ENCODE measurements at regions of chr5 and their contacts with region 1.

Region 1: DNA sequence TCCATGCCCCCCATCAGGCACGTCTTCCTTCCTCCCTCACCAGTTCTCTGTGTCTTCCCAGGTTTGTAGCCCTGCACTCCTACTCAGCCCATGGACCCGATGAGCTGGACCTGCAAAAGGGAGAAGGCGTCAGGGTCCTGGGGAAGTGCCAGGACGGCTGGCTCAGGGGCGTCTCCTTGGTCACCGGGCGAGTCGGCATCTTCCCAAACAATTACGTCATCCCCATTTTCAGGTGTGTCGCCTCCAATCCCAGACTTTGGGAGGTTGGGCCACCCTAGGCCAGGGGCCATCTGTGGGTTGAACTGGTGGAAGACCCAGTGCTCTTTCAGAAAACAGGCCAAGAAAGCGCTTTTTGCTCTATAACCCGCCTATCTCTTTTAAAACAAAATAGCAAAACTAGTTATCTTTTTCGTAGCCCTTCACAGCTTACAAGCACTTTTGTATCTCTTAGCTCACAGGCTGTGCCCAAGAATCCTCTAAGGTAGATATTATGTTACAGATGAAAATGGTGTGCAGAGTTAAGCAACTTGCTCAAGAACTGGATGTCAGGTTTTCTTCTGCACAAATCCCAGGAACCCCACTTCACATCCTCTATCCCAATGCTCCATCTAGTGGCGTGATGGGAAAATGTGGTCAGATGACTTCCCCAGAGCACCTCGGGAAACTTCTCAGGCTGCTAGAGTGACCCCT is 56.2 kb downstream of the PLAC8L1 start:
- DNase-seq: no peak
- H3K4me3 Mint-ChIP-seq: no peak overlapping the region
- H3K27ac Mint-ChIP-seq: no peak overlapping the region
- H3K4me1 Mint-ChIP-seq: no peaks in the 10 kb centered on the region
- H3K27me3 Mint-ChIP-seq: peaks cover 16% of the 10 kb centered on the region

Region 2: DNA sequence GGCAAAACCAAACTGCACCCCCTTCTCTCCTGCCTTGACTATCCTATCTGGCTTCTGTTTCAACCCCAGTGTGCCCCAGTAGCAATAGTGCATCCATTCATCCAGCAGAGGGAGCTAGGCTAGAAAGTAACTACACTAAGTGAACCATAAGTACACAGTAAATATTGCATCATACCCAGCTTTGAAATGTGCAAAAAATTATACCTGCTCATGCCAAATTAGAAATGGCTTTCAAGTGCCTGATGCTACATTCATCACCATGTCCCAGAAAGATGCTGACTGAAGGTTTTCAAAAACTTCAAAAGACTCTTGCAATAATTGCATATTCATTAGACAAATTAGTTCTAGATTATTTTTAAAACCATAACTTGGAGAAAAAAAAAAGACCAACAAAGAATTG is 367.5 kb before region 1 on chr5:
- intact Hi-C with region 1: loop called (anchors 2 kb)
- DNase-seq: peak; percentile 77
- H3K4me3 Mint-ChIP-seq: no peak overlapping the region
- H3K27ac Mint-ChIP-seq: no peak overlapping the region
- H3K4me1 Mint-ChIP-seq: no peaks in the 10 kb centered on the region
- H3K27me3 Mint-ChIP-seq: no peaks in the 10 kb centered on the region

Region 3: GRCh38 chr5:145697251-145697990 is 351.7 kb before region 1 on chr5:
- intact Hi-C with region 1: loop called (anchors 5 kb)
- DNase-seq: peak; percentile 68
- H3K4me3 Mint-ChIP-seq: no peak overlapping the region
- H3K27ac Mint-ChIP-seq: no peak overlapping the region
- H3K4me1 Mint-ChIP-seq: no peaks in the 10 kb centered on the region
- H3K27me3 Mint-ChIP-seq: no peaks in the 10 kb centered on the region

Region 4: DNA sequence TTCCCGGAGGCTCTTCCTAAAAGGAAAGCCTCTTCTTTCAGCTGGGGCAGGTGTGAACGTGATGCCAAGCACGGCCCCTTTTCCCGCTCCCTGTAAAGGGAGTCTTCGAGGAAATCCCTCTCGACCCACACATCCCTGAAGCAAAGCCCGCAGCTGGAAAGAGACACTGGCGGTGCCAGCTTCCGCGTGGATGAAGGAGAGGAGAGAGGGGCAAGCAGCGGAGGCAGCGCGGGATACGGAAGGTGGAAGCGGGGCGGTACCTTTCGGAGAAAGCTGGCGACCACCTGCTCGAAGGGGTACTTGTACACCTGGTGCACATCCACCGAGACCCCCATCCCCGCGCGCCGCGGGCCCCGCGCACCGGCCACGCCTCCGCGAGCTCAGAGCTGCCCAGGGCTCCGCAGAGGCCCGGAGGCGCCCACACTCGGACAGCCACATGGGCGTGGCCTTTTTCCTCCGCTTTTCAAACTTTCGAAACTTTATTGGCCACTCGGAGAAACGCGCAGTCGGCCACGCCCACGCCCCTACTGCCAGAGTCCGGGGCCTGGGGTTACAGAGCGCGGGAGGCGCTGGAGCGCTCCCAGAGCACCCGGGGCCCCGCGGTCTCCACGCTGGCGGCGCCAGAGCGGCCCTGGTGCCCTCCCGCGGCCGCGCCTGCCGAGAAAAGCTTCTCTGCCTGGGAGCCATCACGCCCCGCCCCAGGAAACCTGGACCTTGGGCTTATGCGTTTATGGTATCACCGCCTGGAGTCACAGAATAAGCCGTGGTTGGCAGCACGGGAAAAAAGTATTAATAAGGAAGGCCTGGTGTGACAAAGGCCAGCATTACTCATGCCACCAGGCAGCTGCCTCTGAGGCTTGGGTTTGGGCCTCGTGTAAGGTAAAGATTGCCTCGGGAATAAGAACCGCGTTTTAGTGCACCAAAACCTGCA is 214.0 kb before region 1 on chr5 and contains the start of gene PRELID2:
- intact Hi-C with region 1: loop called (anchors 5 kb)
- DNase-seq: peak; percentile 88
- H3K4me3 Mint-ChIP-seq: peak within 1 kb of the TSS; percentile 77
- H3K27ac Mint-ChIP-seq: no peak within 1 kb of the TSS
- H3K4me1 Mint-ChIP-seq: peaks cover 15% of the 10 kb centered on the region
- H3K27me3 Mint-ChIP-seq: peaks cover 18% of the 10 kb centered on the region
- total RNA-seq, gene PRELID2: 3.1 and 3.6 TPM in 2 replicates

Region 5: GRCh38 chr5:146218168-146218567 is 169.0 kb after region 1 on chr5:
- intact Hi-C with region 1: no loop called
- DNase-seq: no peak
- H3K4me3 Mint-ChIP-seq: no peak overlapping the region
- H3K27ac Mint-ChIP-seq: no peak overlapping the region
- H3K4me1 Mint-ChIP-seq: peaks cover 18% of the 10 kb centered on the region
- H3K27me3 Mint-ChIP-seq: no peaks in the 10 kb centered on the region

Measured in activated CD4-positive, alpha-beta T cell treated with anti-CD3 and anti-CD28 coated beads, Interleukin-2, amount 10 ng/mL, durations not matched to agents 24 days and 14 days (primary cell).